Mammary epithelial cell (primary cell): ENCODE measurements at regions of chr7 and their contacts with region 1.

Region 1: DNA sequence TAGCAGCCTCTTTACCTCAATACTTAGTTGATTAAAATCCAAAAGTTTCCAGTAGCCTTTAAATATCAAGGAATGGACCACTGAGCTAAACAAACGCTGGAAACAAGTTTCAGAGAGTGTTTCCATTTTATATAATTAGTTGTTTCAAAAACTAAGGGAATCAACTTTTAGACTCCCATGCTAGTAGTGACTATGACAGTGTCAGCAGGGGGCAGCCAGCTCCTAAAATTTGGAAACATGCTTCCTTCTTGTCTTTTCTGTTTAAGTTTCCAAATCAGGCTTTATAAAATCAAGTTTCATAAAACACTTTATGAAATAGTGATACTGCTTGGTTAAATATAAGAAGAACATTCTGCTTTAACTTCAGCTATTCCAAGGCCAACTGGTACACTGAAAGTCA is 138.2 kb upstream of the TMEM229A start:
- DNase-seq: peak; percentile 6
- H3K4me3 ChIP-seq: no peak overlapping the region
- H3K27ac ChIP-seq: no peak overlapping the region
- H3K4me1 ChIP-seq: no peaks in the 10 kb centered on the region
- H3K27me3 ChIP-seq: no peaks in the 10 kb centered on the region
- CTCF ChIP-seq: peak; percentile 42 to 69

Region 2: DNA sequence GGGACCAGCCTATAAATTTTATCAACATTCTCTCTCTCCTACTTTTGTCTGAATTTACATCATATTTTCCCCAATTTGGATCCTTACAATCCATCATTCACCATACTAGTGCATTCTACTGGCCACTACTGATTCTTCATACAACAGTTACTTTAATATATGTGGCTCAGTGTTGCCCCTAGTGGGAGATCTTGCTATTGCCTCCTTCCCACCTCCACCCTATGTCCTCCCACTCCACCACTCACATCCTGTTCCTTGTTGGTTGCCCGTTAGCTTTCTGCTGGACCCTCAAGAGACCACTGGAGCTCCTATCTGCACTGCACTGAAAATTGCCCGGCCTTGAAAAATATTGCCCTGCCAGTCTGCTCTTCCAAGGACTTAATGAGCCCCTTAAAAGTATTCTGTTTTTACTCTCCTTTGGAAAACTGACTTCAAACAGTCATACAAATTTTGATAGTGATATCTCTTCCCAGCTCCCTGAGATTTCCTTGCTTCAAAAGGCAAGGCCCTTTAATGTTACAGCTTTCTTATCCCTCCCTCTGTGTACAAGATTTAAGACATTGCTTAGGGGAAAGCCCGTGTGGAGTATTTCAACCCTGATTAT is 105.1 kb after region 1 on chr7:
- CTCF ChIA-PET with region 1: no interaction called
- dilution Hi-C with region 1: no loop called
- in situ Hi-C with region 1: no loop called
- intact Hi-C with region 1: loop called (anchors 1 kb)
- DNase-seq: peak; percentile 14
- H3K4me3 ChIP-seq: no peak overlapping the region
- H3K27ac ChIP-seq: no peak overlapping the region
- H3K4me1 ChIP-seq: no peaks in the 10 kb centered on the region
- H3K27me3 ChIP-seq: peaks cover 1% of the 10 kb centered on the region
- CTCF ChIP-seq: peak; percentile 63 to 69